CD4-positive, alpha-beta T cell (primary cell): ENCODE measurements at regions of chr2 and their contacts with region 1.

Region 1: DNA sequence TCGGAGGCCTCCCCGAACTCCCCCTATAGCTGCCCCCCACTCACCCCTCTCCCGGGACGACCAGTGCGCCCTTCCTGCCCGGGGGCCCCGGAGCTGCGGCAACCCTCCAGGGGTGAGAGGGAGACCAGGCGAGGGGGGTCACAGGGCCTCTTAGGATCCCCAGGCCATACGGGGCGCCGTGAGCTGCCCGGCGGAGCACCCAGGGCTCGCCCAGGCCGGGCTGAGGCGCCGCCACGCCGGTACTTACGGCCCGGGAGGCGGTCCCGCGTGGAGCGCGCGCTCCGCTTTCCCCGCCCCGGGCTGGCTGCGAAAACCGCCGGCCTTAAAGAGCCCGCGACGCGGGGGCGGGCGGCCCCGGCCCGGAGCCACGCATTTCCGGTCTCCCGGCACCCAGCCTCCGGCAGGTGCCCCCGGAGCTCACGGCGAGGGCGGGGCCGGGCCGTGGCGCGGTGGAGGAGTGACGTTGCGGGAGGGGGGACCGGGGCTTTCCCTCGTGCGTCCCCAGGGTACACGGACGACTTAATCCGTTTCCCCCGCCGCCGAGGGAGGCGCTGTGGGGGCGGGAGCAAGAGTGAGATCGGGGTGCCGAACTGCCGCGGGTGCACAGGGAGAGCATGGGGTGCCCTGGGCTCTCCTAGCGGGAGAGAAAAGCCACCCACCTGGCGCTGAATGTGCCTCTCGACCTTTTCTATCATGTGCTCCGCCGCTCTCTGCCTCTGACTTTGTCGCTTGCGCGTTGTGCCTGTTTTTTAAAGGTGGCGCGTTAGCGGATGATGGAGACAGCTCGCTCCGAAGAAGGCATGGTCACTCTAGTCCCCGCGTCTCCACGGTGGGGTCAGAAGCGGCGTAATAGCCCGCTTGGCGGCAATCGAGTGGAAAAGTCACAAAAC is at the start of gene METTL21A:
- DNase-seq: peak; percentile 89 to 99 (median 92)
- ATAC-seq: peak; percentile 77
- H3K4me3 ChIP-seq: peak within 1 kb of the TSS; percentile 99
- H3K4me3 Mint-ChIP-seq: peak within 1 kb of the TSS; percentile 98
- H3K27ac ChIP-seq: peak within 1 kb of the TSS; percentile 97 to 98
- H3K27ac Mint-ChIP-seq: peak within 1 kb of the TSS; percentile 96
- H3K4me1 ChIP-seq: peaks cover 46% of the 10 kb centered on the region
- H3K4me1 Mint-ChIP-seq: peaks cover 51% of the 10 kb centered on the region
- H3K27me3 ChIP-seq: no peaks in the 10 kb centered on the region
- H3K27me3 Mint-ChIP-seq: no peaks in the 10 kb centered on the region
- CTCF ChIP-seq: peak; percentile 68
- total RNA-seq, gene METTL21A: 10.8 to 11.9 TPM

Region 2: DNA sequence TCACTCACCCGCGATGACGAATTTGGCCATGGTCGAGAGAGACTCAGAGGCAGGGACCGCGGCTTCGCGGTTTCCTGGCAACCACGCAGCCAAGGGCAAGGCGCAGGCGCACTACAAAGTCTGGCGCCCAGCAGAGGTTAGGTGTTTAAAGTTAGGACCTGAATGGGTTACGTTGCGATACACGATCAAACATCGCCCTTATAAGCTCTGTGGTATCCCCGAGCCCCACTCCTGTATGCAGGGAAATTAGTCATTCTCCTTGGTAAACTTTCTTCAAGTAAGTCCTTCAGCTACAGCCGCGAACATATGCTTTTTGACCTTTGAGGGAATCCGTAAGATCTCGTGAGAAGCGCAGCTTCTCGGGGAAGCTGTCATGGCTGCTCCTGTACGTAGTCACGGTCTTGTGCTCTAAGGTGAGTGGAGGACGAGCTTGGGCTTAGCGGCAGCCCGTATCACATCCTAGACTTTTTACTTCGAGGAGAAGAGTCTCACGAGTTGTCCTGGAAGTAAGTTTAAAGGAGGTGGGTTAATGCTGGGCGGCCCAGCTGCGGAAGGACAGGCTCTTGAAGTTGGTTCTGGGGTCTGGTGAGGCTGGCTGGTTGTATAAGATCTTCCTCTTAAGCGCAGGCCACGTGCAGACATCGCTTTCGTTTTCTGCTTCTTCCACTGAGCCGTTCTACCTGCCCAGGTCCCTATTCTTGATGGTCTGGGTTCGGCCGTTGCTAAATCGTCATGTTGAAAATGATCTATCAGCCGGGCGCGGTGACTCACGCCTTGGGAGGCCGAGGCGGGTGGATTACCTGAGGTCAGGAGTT is 859.8 kb before region 1 on chr2 and contains the starts of genes FASTKD2 and MDH1B:
- CTCF ChIA-PET with region 1: interaction called, 3 read pairs
- POLR2A ChIA-PET with region 1: interaction called, 5 read pairs
- intact Hi-C with region 1: loop called in 1 of 2 experiments (anchors 2 kb)
- DNase-seq: peak; percentile 63 to 94 (median 74)
- ATAC-seq: peak; percentile 89
- H3K4me3 ChIP-seq: peak within 1 kb of the TSS; percentile 71
- H3K4me3 Mint-ChIP-seq: peak within 1 kb of the TSS; percentile 96
- H3K27ac ChIP-seq: peak within 1 kb of the TSS; percentile 80 to 85
- H3K27ac Mint-ChIP-seq: peak within 1 kb of the TSS; percentile 97
- H3K4me1 ChIP-seq: peaks cover 16% of the 10 kb centered on the region
- H3K4me1 Mint-ChIP-seq: peaks cover 46% of the 10 kb centered on the region
- H3K27me3 ChIP-seq: peaks cover 0 to 13% of the 10 kb centered on the region in 2 experiments
- H3K27me3 Mint-ChIP-seq: peaks cover 5% of the 10 kb centered on the region
- CTCF ChIP-seq: no peak
- total RNA-seq, gene FASTKD2: 24.9 to 25.7 TPM
- total RNA-seq, gene MDH1B: 0.25 to 0.31 TPM

Region 3: GRCh38 chr2:207584952-207585351 is 40.3 kb before region 1 on chr2:
- CTCF ChIA-PET with region 1: interaction called, 3 read pairs
- POLR2A ChIA-PET with region 1: no interaction called
- intact Hi-C with region 1: loop called in 1 of 2 experiments (anchors 5 kb)
- DNase-seq: no peak
- ATAC-seq: no peak
- H3K4me3 ChIP-seq: no peak overlapping the region
- H3K4me3 Mint-ChIP-seq: no peak overlapping the region
- H3K27ac ChIP-seq: no peak overlapping the region
- H3K27ac Mint-ChIP-seq: peak overlapping the region; percentile 2
- H3K4me1 ChIP-seq: no peaks in the 10 kb centered on the region
- H3K4me1 Mint-ChIP-seq: peaks cover 21% of the 10 kb centered on the region
- H3K27me3 ChIP-seq: no peaks in the 10 kb centered on the region
- H3K27me3 Mint-ChIP-seq: no peaks in the 10 kb centered on the region
- CTCF ChIP-seq: no peak

Region 4: GRCh38 chr2:207769597-207770486 is 144.6 kb after region 1 on chr2 and contains the start of gene FZD5:
- CTCF ChIA-PET with region 1: interaction called, 3 read pairs
- POLR2A ChIA-PET with region 1: interaction called, 4 read pairs
- intact Hi-C with region 1: loop called in 1 of 2 experiments (anchors 2 kb)
- DNase-seq: peak; percentile 26 to 91 (median 58)
- ATAC-seq: peak; percentile 64
- H3K4me3 ChIP-seq: peak within 1 kb of the TSS; percentile 73
- H3K4me3 Mint-ChIP-seq: peak within 1 kb of the TSS; percentile 97
- H3K27ac ChIP-seq: no peak within 1 kb of the TSS
- H3K27ac Mint-ChIP-seq: peak within 1 kb of the TSS; percentile 39
- H3K4me1 ChIP-seq: peaks cover 40% of the 10 kb centered on the region
- H3K4me1 Mint-ChIP-seq: peaks cover 34% of the 10 kb centered on the region
- H3K27me3 ChIP-seq: peaks cover 15 to 20% of the 10 kb centered on the region in 2 experiments
- H3K27me3 Mint-ChIP-seq: peaks cover 48% of the 10 kb centered on the region
- CTCF ChIP-seq: peak; percentile 15
- total RNA-seq, gene FZD5: 0.19 to 0.25 TPM

Region 5: DNA sequence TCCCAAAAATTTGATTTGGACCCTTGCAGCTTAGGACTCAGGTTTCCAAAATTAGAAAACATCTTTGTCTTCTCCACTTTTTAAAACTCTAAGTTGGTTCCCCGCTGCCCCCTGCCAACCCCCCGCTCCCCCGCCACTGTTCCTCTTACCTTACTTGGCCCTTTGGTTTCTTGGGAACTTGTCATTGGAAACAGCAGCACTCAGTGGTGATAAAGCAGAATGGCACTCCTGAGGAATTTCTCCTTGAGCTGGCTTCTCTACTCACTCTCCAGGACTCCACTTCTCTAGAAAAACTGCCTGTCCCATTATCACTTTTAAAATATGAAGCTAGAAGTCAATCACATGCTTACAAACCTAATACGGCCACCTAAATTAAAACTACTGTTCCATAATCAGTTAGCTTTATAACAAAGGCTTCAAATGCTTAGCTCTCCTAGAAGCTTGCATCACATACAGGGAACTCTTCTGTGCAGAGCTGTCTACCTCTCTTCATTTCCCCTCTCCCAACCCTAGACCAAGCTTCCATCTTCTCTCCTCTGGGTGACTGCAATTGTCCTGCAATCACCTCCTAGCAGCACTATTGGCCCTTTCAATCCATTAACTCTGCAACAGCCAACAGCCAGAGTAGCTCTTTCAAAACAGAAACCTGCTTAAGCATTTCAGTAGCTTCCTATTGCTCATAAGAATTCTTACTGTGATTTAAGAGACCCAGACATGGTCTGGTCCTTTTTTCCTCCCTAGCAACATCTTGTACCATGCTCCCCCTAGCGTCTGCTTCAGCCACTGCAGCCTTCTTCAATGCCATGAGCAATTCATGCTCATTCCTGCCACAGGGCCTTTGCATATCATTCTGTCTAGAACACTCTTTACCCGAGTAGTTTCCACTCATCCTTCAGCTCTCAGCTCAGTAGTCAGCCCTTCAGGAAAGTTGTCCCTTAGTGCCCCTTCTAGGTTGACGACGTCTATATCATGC is 415.2 kb after region 1 on chr2:
- CTCF ChIA-PET with region 1: interaction called, 3 read pairs
- POLR2A ChIA-PET with region 1: no interaction called
- intact Hi-C with region 1: loop called (anchors 5 kb)
- DNase-seq: peak; percentile 41 to 76 (median 54)
- ATAC-seq: peak; percentile 74
- H3K4me3 ChIP-seq: no peak overlapping the region
- H3K4me3 Mint-ChIP-seq: no peak overlapping the region
- H3K27ac ChIP-seq: no peak overlapping the region
- H3K27ac Mint-ChIP-seq: no peak overlapping the region
- H3K4me1 ChIP-seq: no peaks in the 10 kb centered on the region
- H3K4me1 Mint-ChIP-seq: no peaks in the 10 kb centered on the region
- H3K27me3 ChIP-seq: no peaks in the 10 kb centered on the region
- H3K27me3 Mint-ChIP-seq: no peaks in the 10 kb centered on the region
- CTCF ChIP-seq: peak; percentile 62

Region 6: DNA sequence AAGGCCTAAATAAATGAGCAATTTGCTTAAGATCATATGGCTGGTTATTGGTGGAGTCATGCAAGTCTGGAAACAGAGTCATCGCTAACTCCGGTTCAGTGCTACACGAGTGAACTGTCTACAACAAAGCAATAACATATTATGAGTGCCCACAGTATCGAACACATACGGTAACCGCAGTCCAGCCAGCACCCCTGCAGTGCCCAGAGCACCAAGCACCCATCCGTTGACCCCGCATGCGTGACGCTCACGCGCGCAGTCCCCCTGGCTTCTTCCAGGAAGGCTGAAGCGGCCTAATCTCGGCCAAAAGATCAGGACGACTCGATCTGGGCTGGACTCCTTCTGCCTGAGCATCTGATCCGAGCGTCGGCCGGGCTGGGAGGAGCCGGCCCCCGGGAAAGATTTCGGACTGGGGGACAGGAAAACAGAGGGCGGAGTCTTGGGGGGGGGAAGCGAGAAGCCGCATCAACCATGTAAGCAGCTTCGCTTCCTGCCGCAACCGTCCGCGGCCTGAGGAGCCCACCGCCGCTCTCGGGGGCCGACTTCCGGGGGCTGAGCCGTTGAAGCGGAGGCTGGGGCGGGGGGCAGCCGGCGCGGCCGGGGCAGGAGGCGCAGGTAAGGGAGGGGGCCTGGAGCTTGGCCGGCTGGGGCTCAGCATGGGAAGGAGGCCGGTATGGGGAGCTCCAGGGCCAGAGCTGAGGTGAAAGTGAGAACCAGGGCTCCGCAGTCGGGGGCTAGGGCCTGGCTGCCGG is 640.7 kb after region 1 on chr2 and contains the start of gene PIKFYVE:
- CTCF ChIA-PET with region 1: no interaction called
- POLR2A ChIA-PET with region 1: interaction called, 10 read pairs
- intact Hi-C with region 1: loop called (anchors 2 to 5 kb)
- DNase-seq: peak; percentile 66 to 94 (median 83)
- ATAC-seq: peak; percentile 74
- H3K4me3 ChIP-seq: peak within 1 kb of the TSS; percentile 90
- H3K4me3 Mint-ChIP-seq: peak within 1 kb of the TSS; percentile 96
- H3K27ac ChIP-seq: peak within 1 kb of the TSS; percentile 54 to 83
- H3K27ac Mint-ChIP-seq: peak within 1 kb of the TSS; percentile 96
- H3K4me1 ChIP-seq: peaks cover 23% of the 10 kb centered on the region
- H3K4me1 Mint-ChIP-seq: peaks cover 55% of the 10 kb centered on the region
- H3K27me3 ChIP-seq: no peaks in the 10 kb centered on the region
- H3K27me3 Mint-ChIP-seq: no peaks in the 10 kb centered on the region
- CTCF ChIP-seq: no peak
- total RNA-seq, gene PIKFYVE: 29.3 to 29.9 TPM